ENCODE measurements at regions of chr19 and their contacts with region 1.

Region 1: GRCh38 chr19:9621156-9622037 is at the start of gene ZNF561:
- DNase-seq: peak; percentile 93
- ATAC-seq: peak; percentile 89
- H3K4me3 Mint-ChIP-seq: peak within 1 kb of the TSS; percentile 89
- H3K27ac Mint-ChIP-seq: peak within 1 kb of the TSS; percentile 96
- H3K4me1 Mint-ChIP-seq: peaks cover 23% of the 10 kb centered on the region
- H3K27me3 Mint-ChIP-seq: no peaks in the 10 kb centered on the region
- total RNA-seq, gene ZNF561: 19.1 to 22.7 TPM

Region 2: DNA sequence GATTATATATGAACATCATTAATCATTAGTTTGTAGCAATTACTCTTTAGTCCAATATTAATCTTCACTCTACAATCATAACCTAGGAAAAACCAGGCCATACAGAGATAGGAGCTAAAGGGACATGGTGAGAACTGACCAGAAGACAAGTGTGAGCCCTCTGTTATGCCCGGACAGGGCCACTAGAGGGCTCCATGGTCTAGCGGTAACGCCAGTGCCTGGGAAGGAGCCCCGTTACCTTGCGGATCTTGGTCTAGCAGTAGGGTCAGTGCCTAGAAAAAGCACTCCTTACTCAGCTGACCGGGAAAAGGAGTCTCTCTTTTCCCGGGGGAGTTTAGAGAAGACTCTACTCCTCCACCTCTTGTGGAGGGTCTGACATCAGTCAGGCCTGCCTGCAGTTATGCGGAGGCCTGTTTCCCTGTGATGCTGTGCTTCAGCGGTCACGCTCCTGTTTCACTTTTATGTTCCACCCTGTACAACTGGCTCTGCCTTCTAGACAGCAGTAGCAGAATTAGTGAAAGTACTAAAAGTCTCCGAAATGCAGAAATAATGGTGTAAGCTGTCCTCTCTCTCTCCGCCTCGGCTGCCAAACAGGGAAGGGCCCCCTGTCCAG is 415.8 kb before region 1 on chr19:
- CTCF ChIA-PET with region 1: no interaction called
- POLR2A ChIA-PET with region 1: no interaction called
- intact Hi-C with region 1: loop called in 1 of 2 experiments (anchors 1 kb)
- DNase-seq: peak; percentile 79
- ATAC-seq: peak; percentile 75
- H3K4me3 Mint-ChIP-seq: no peak overlapping the region
- H3K27ac Mint-ChIP-seq: no peak overlapping the region
- H3K4me1 Mint-ChIP-seq: no peaks in the 10 kb centered on the region
- H3K27me3 Mint-ChIP-seq: peaks cover 9% of the 10 kb centered on the region

Region 3: DNA sequence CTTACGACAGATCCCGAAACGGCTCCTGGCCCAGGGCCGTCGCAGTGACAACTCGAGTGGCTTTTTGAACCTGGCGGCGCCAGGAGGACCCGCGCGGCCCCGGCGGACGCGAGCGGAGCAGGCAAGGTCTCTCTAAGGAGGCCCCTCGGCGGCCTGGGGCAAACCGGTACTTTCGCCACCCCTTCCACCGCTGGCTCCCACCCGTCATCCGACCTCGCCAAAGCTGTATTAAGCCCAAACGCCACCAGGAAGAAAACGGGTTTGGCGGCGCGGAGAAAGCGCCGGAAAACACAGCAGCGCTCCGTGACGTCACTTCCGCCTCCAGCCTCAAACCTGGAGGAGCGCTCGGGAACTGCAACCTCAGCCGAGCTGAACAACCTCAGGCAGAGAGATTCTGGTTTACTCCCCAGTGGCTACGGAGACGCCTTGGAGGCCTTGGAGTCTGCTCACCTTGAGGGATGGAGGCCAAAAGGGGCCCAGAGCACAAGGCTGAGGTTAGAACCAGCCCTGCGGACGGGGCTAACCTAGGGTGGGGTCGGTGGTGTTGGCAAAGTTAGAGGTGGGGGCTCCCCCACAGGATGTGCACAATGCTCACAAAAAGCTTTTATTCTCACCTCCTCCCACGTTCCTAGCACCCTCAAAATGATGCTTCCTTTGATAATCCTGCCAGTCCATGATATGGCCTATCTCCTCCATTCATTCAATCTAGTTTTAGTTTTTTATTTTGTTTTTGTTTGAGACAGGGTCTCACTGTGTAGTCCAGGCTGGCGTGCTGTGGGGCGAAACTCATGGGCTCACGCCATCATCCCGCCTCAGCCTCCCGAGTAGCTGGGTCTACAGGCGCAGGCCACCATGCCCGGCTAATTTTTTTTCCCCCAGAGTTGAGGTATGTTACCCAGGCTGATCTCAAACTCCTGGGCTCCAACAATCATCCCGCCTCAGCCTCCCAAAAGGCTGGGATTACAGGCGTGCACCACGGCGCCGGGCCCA is 185.8 kb before region 1 on chr19 and contains the start of gene ZNF266:
- CTCF ChIA-PET with region 1: interaction called, 3 read pairs
- POLR2A ChIA-PET with region 1: no interaction called
- intact Hi-C with region 1: loop called in 1 of 2 experiments (anchors 1 kb)
- DNase-seq: peak; percentile 97
- ATAC-seq: peak; percentile 91
- H3K4me3 Mint-ChIP-seq: peak within 1 kb of the TSS; percentile 95
- H3K27ac Mint-ChIP-seq: peak within 1 kb of the TSS; percentile 99
- H3K4me1 Mint-ChIP-seq: peaks cover 33% of the 10 kb centered on the region
- H3K27me3 Mint-ChIP-seq: no peaks in the 10 kb centered on the region
- total RNA-seq, gene ZNF266: 17.1 to 22.4 TPM

Region 4: GRCh38 chr19:9597027-9597426 is 24.4 kb before region 1 on chr19:
- CTCF ChIA-PET with region 1: no interaction called
- POLR2A ChIA-PET with region 1: interaction called, 3 read pairs
- intact Hi-C with region 1: loop called in 1 of 2 experiments (anchors 1 kb)
- DNase-seq: no peak
- ATAC-seq: peak; percentile 94
- H3K4me3 Mint-ChIP-seq: no peak overlapping the region
- H3K27ac Mint-ChIP-seq: peak overlapping the region; percentile 80
- H3K4me1 Mint-ChIP-seq: peaks cover 9% of the 10 kb centered on the region
- H3K27me3 Mint-ChIP-seq: peaks cover 6% of the 10 kb centered on the region

Region 5: GRCh38 chr19:9768175-9769112 is 147.0 kb after region 1 on chr19 and contains the start of gene ZNF846:
- CTCF ChIA-PET with region 1: interaction called, 3 read pairs
- POLR2A ChIA-PET with region 1: no interaction called
- intact Hi-C with region 1: loop called (anchors 1 kb)
- DNase-seq: peak; percentile 96
- ATAC-seq: peak; percentile 98
- H3K4me3 Mint-ChIP-seq: peak within 1 kb of the TSS; percentile 84
- H3K27ac Mint-ChIP-seq: peak within 1 kb of the TSS; percentile 90
- H3K4me1 Mint-ChIP-seq: peaks cover 7% of the 10 kb centered on the region
- H3K27me3 Mint-ChIP-seq: no peaks in the 10 kb centered on the region
- total RNA-seq, gene ZNF846: 5.3 to 6.4 TPM

Region 6: GRCh38 chr19:9818734-9819589 is 197.6 kb after region 1 on chr19 and contains the start of gene FBXL12:
- CTCF ChIA-PET with region 1: no interaction called
- POLR2A ChIA-PET with region 1: no interaction called
- intact Hi-C with region 1: loop called in 1 of 2 experiments (anchors 1 kb)
- DNase-seq: peak; percentile 100
- ATAC-seq: peak; percentile 92
- H3K4me3 Mint-ChIP-seq: peak within 1 kb of the TSS; percentile 88
- H3K27ac Mint-ChIP-seq: peak within 1 kb of the TSS; percentile 90
- H3K4me1 Mint-ChIP-seq: peaks cover 26% of the 10 kb centered on the region
- H3K27me3 Mint-ChIP-seq: no peaks in the 10 kb centered on the region
- total RNA-seq, gene FBXL12: 19.9 to 22.5 TPM

Region 7: GRCh38 chr19:9914315-9915207 is 293.2 kb after region 1 on chr19:
- CTCF ChIA-PET with region 1: no interaction called
- POLR2A ChIA-PET with region 1: no interaction called
- intact Hi-C with region 1: loop called in 1 of 2 experiments (anchors 1 kb)
- DNase-seq: peak; percentile 93
- ATAC-seq: peak; percentile 97
- H3K4me3 Mint-ChIP-seq: peak overlapping the region; percentile 53
- H3K27ac Mint-ChIP-seq: no peak overlapping the region
- H3K4me1 Mint-ChIP-seq: peaks cover 3% of the 10 kb centered on the region
- H3K27me3 Mint-ChIP-seq: peaks cover 27% of the 10 kb centered on the region